ENCODE measurements at regions of chr10 and their contacts with region 1.

Region 1: DNA sequence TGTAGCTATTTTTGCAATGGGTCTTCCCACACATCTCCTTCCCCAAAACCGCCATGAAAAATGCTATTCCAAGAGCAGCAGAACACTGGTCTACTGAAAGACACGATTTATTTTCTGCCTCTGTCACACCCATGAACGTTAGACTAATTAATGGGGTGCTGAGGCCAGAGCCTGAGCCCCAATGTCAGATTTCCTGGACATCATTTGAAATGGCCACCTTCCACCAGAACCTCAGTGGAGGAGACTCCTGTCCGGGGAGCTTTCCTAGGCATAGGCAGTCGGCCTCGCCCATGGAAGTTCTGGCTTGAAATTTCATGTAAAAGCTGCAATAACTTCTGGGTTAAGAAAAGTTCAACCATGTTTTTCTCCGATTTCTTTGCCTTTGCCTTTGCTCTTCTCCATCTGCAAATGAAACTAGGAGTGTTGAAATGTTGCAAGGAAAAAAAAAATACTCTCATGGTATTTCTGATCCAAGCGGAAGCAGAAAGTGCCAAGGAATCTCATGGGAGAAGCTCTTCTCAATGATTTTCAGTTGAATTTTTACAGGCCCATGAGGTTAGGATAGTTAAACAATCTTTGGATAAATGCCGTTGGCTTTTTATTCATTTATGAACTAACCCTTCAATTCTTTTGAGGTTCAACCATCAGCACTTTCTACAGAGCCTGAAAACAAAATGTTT is 570.8 kb upstream of the MGMT start:
- DNase-seq: peak in 1 of 2 donors; percentile 26
- ATAC-seq: peak; percentile 73 to 77
- H3K4me3 ChIP-seq: no peak overlapping the region
- H3K27ac ChIP-seq: peak overlapping the region in 3 of 4 donors; percentile 41 to 59 (median 53)
- H3K4me1 ChIP-seq: peaks cover 3 to 5% of the 10 kb centered on the region in 2 donors
- H3K27me3 ChIP-seq: no peaks in the 10 kb centered on the region
- CTCF ChIP-seq: no peak
- POLR2A ChIP-seq: no peak

Region 2: GRCh38 chr10:128912568-128913311 is 16.5 kb after region 1 on chr10:
- in situ Hi-C with region 1: no loop called
- intact Hi-C with region 1: no loop called
- DNase-seq: no peak
- ATAC-seq: no peak
- H3K4me3 ChIP-seq: no peak overlapping the region
- H3K27ac ChIP-seq: no peak overlapping the region
- H3K4me1 ChIP-seq: peaks cover 0 to 6% of the 10 kb centered on the region in 2 donors
- H3K27me3 ChIP-seq: no peaks in the 10 kb centered on the region
- CTCF ChIP-seq: no peak
- POLR2A ChIP-seq: no peak

Region 3: GRCh38 chr10:129949891-129950291 is 1053.6 kb after region 1 on chr10:
- in situ Hi-C with region 1: no loop called
- intact Hi-C with region 1: loop called (anchors 5 kb)
- DNase-seq: peak; percentile 43 to 46
- ATAC-seq: peak in 1 of 2 donors; percentile 14
- H3K4me3 ChIP-seq: peak overlapping the region in 3 of 4 donors; percentile 10 to 15 (median 10)
- H3K27ac ChIP-seq: peak overlapping the region; percentile 76 to 84 (median 80)
- H3K4me1 ChIP-seq: peaks cover 50 to 66% of the 10 kb centered on the region in 2 donors
- H3K27me3 ChIP-seq: peaks cover 7 to 16% (median 14%) of the 10 kb centered on the region in 3 donors
- CTCF ChIP-seq: no peak
- POLR2A ChIP-seq: peak in 1 of 2 donors; percentile 28